Activated T-helper 1 cell treated with anti-CD3 and anti-CD28 coated beads, Interleukin-12 subunit alpha, Interleukin-12 subunit beta, Interleukin-2, Interleukin-4 antibody, amounts not matched to agents 30 ng/mL and 10 ng/mL and 1 ng/mL, durations not matched to agents 14 hours and 24 hours and 36 hours (primary cell): ENCODE measurements at regions of chr3 and their contacts with region 1.

Region 1: GRCh38 chr3:11651900-11652299 is 8.2 kb upstream of the VGLL4 start:
- DNase-seq: no peak
- H3K4me3 Mint-ChIP-seq: no peak overlapping the region
- H3K27ac Mint-ChIP-seq: no peak overlapping the region
- H3K4me1 Mint-ChIP-seq: no peaks in the 10 kb centered on the region
- H3K27me3 Mint-ChIP-seq: peaks cover 15% of the 10 kb centered on the region

Region 2: DNA sequence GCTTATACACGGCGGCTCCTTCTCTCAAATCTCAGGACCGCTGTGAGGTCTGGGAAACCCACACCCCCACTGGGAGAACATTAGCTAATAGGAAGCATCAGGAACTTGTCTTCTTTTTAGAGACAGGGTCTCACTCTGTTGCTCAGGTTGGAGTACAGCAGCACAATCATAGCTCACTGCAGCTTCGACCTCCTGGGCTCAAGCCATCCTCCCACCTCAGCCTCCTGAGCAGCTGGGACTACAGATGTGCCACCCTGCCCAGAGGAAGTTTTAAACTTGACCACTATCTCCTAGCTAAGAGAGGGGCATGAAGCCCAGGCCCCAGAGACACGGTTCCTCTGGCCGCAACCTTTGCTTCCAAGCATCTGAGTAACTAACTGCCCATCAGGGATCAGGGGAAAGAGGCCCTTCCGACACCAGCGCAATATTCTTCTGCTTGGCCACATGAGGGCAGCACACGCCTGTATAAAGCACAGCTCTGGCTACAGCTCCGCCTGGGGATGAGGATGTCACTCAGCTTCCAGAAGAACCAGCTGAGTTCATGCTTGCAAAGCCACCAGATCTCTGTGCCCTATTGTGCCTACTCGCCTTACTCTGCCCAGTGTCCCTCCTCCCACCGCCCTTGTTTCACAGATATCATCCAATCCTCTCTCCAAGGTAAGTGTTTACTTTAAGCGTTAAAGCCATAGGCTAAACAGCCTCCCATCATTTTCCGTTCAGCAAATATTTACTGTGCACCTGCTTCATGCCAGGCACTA is 893.4 kb before region 1 on chr3:
- intact Hi-C with region 1: loop called (anchors 2 kb)
- DNase-seq: no peak
- H3K4me3 Mint-ChIP-seq: no peak overlapping the region
- H3K27ac Mint-ChIP-seq: no peak overlapping the region
- H3K4me1 Mint-ChIP-seq: peaks cover 6% of the 10 kb centered on the region
- H3K27me3 Mint-ChIP-seq: peaks cover 12% of the 10 kb centered on the region

Region 3: GRCh38 chr3:11060500-11061251 is 591.2 kb before region 1 on chr3:
- intact Hi-C with region 1: loop called (anchors 1 kb)
- DNase-seq: peak; percentile 8
- H3K4me3 Mint-ChIP-seq: no peak overlapping the region
- H3K27ac Mint-ChIP-seq: no peak overlapping the region
- H3K4me1 Mint-ChIP-seq: no peaks in the 10 kb centered on the region
- H3K27me3 Mint-ChIP-seq: peaks cover 3% of the 10 kb centered on the region

Region 4: GRCh38 chr3:11335056-11335608 is 316.8 kb before region 1 on chr3:
- intact Hi-C with region 1: loop called (anchors 2 kb)
- DNase-seq: peak; percentile 4
- H3K4me3 Mint-ChIP-seq: no peak overlapping the region
- H3K27ac Mint-ChIP-seq: no peak overlapping the region
- H3K4me1 Mint-ChIP-seq: no peaks in the 10 kb centered on the region
- H3K27me3 Mint-ChIP-seq: no peaks in the 10 kb centered on the region

Region 5: GRCh38 chr3:11719406-11720230 is 67.7 kb after region 1 on chr3:
- intact Hi-C with region 1: loop called (anchors 2 kb)
- DNase-seq: peak; percentile 34
- H3K4me3 Mint-ChIP-seq: peak overlapping the region; percentile 49
- H3K27ac Mint-ChIP-seq: no peak overlapping the region
- H3K4me1 Mint-ChIP-seq: peaks cover 22% of the 10 kb centered on the region
- H3K27me3 Mint-ChIP-seq: peaks cover 24% of the 10 kb centered on the region